Activated naive CD4-positive, alpha-beta T cell treated with anti-CD3 and anti-CD28 coated beads for 36 hours (primary cell): ENCODE measurements at regions of chr2 and their contacts with region 1.

Region 1: GRCh38 chr2:113248997-113249770 is 29.5 kb downstream of the PAX8 start:
- DNase-seq: peak; percentile 88
- H3K4me3 Mint-ChIP-seq: no peak overlapping the region
- H3K27ac Mint-ChIP-seq: peak overlapping the region; percentile 37
- H3K4me1 Mint-ChIP-seq: peaks cover 48% of the 10 kb centered on the region
- H3K27me3 Mint-ChIP-seq: no peaks in the 10 kb centered on the region

Region 2: GRCh38 chr2:113370478-113371091 is 121.4 kb after region 1 on chr2:
- CTCF ChIA-PET with region 1: interaction called, 25 read pairs
- intact Hi-C with region 1: loop called (anchors 1 kb)
- DNase-seq: peak; percentile 86
- H3K4me3 Mint-ChIP-seq: no peak overlapping the region
- H3K27ac Mint-ChIP-seq: no peak overlapping the region
- H3K4me1 Mint-ChIP-seq: peaks cover 5% of the 10 kb centered on the region
- H3K27me3 Mint-ChIP-seq: no peaks in the 10 kb centered on the region

Region 3: GRCh38 chr2:113390124-113390849 is 141.1 kb after region 1 on chr2:
- CTCF ChIA-PET with region 1: interaction called, 33 read pairs
- intact Hi-C with region 1: loop called (anchors 5 kb)
- DNase-seq: peak; percentile 70
- H3K4me3 Mint-ChIP-seq: peak overlapping the region; percentile 35
- H3K27ac Mint-ChIP-seq: peak overlapping the region; percentile 61
- H3K4me1 Mint-ChIP-seq: peaks cover 15% of the 10 kb centered on the region
- H3K27me3 Mint-ChIP-seq: peaks cover 3% of the 10 kb centered on the region